ENCODE measurements at regions of chr3 and their contacts with region 1.

Region 1: GRCh38 chr3:76245046-76245445 is 459.7 kb upstream of the ZNF717 start:
- DNase-seq: no peak
- ATAC-seq: no peak
- H3K4me3 Mint-ChIP-seq: no peak overlapping the region
- H3K27ac Mint-ChIP-seq: no peak overlapping the region
- H3K4me1 Mint-ChIP-seq: no peaks in the 10 kb centered on the region
- H3K27me3 Mint-ChIP-seq: no peaks in the 10 kb centered on the region
- CTCF ChIP-seq: no peak

Region 2: GRCh38 chr3:76222201-76222600 is 22.8 kb before region 1 on chr3:
- CTCF ChIA-PET with region 1: no interaction called
- POLR2A ChIA-PET with region 1: no interaction called
- intact Hi-C with region 1: no loop called
- DNase-seq: no peak
- ATAC-seq: no peak
- H3K4me3 Mint-ChIP-seq: no peak overlapping the region
- H3K27ac Mint-ChIP-seq: no peak overlapping the region
- H3K4me1 Mint-ChIP-seq: no peaks in the 10 kb centered on the region
- H3K27me3 Mint-ChIP-seq: no peaks in the 10 kb centered on the region
- CTCF ChIP-seq: no peak

Region 3: DNA sequence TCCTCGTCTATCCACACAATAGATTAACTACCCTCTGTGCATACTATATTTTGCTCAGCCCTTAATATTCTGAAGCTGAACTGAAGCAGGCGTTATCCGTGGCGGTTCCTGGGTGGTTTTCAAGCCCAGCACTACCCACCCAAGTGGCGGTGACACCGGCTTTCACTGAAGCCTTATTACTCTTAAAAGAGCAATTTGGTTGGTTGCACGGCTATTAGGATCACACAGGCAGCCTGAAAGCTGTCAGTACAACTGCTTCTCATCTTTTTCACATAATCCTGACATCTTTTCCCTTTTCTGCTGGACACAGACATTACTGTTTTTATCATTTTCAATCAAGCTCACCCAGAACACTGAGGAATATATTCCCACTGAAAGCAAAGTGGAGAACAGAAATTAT is 65.6 kb after region 1 on chr3:
- CTCF ChIA-PET with region 1: no interaction called
- POLR2A ChIA-PET with region 1: no interaction called
- intact Hi-C with region 1: loop called (anchors 10 kb)
- DNase-seq: no peak
- ATAC-seq: no peak
- H3K4me3 Mint-ChIP-seq: no peak overlapping the region
- H3K27ac Mint-ChIP-seq: no peak overlapping the region
- H3K4me1 Mint-ChIP-seq: no peaks in the 10 kb centered on the region
- H3K27me3 Mint-ChIP-seq: no peaks in the 10 kb centered on the region
- CTCF ChIP-seq: no peak